ENCODE measurements at regions of chr11 and their contacts with region 1.

Region 1: DNA sequence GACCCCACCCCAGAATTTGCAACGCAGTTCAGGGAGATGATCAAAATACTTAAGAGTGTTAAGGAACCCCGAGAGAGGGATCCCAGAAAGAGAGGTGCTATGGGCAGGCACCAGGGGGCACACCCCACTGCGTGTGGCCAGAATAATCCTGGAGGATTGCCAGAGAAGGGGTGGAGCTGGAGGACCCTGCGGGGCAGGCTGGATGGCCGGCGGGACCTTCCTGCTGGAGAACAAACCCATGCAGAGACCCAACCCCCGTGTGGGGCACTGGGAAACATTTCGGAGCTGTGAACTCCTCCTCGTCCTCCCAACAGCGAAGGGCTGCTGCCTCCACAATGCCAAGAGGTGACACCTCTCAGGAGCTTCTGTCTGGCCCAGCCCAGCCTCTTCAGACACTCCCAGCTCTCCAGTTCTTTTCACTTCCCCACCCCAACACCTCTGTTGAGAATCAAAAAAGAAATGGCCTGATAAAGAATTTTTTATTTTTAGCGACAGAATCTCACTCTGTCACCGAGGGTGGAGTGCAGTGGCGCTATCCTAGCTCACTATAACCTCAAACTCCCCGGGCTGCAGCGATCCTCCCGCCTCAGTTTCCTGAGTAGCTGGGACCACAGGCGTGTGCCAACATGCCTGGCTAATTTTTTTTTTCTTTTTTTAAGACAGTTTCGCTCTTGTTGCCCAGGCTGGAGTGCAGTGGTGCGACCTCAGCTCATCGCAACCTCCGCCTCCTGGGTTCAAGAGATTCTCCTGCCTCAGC is 25.6 kb downstream of the RHOD start:
- DNase-seq: no peak
- ATAC-seq: peak; percentile 5
- H3K4me3 ChIP-seq: no peak overlapping the region
- H3K27ac ChIP-seq: no peak overlapping the region
- H3K4me1 ChIP-seq: no peaks in the 10 kb centered on the region
- H3K27me3 ChIP-seq: no peaks in the 10 kb centered on the region

Region 2: DNA sequence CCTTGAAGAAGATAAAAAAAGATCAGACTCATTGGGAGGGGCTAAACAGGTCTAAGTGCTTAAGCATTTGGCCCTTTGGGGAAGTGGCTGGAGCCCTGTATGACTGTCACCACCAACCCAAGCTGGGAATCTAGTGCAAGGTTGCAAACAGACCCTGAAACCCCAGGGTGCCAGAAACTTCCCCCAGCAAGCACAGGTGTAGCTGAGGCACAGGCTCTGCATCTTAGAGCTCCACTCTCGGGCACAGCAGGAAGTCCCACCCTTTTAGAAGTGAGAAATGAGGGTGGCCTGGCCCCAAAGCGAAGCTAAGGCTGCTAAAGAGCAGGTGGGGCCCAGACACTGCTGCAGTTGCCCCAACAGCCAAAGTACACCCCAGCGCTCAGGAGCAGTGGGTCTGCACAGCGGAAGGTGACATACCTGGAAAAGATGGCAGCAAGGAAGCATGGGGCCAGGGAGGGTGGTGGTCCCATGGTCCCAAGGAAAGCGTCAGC is 31.1 kb after region 1 on chr11:
- intact Hi-C with region 1: no loop called
- DNase-seq: peak in 1 of 2 donors; percentile 37
- ATAC-seq: no peak
- H3K4me3 ChIP-seq: no peak overlapping the region
- H3K27ac ChIP-seq: no peak overlapping the region
- H3K4me1 ChIP-seq: peaks cover 0 to 4% of the 10 kb centered on the region in 2 donors
- H3K27me3 ChIP-seq: no peaks in the 10 kb centered on the region

Region 3: GRCh38 chr11:67160874-67161783 is 78.9 kb after region 1 on chr11:
- intact Hi-C with region 1: loop called (anchors 5 to 10 kb)
- DNase-seq: no peak
- ATAC-seq: no peak
- H3K4me3 ChIP-seq: no peak overlapping the region
- H3K27ac ChIP-seq: no peak overlapping the region
- H3K4me1 ChIP-seq: peaks cover 0 to 2% of the 10 kb centered on the region in 2 donors
- H3K27me3 ChIP-seq: no peaks in the 10 kb centered on the region

Region 4: GRCh38 chr11:67167086-67167485 is 84.9 kb after region 1 on chr11:
- intact Hi-C with region 1: loop called (anchors 5 to 10 kb)
- DNase-seq: no peak
- ATAC-seq: no peak
- H3K4me3 ChIP-seq: no peak overlapping the region
- H3K27ac ChIP-seq: no peak overlapping the region
- H3K4me1 ChIP-seq: peaks cover 0 to 5% of the 10 kb centered on the region in 2 donors
- H3K27me3 ChIP-seq: no peaks in the 10 kb centered on the region

Region 5: DNA sequence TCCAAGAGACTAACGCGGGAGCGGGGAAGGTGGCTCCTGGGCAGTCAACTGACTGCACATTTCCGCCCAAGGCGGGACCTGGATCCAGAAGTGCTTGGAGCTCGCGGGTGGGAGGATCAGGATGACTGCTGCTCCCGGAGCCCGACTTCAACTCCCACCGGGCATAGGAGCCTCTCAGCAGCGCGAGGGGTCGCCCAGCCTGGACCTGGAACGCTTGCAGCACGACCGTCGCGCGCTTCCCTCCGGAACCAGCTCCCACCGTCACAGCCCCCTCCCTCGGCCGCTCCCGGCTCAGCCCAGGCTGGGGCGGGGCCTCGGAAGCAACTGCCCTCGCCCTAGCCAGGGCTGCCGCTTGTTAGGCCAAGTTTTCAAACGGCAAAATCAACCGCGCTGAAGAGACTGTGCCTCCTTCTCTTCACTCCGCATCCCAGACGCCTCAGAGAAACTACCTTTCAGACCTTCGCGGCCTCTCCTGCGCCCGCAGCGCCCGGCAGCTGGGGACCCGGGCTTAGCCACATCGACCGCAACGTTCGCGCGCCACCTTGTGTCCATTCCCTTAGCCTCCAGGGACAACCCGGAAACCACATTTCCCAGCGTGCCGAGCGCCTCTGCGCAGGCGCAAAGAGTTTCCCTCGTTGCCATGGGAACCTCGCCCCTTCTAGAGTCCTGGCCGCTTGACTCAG is 235.1 kb after region 1 on chr11:
- intact Hi-C with region 1: loop called in 1 of 2 experiments (anchors 5 kb)
- DNase-seq: peak; percentile 97 to 99
- ATAC-seq: peak; percentile 97
- H3K4me3 ChIP-seq: peak overlapping the region; percentile 45 to 67
- H3K27ac ChIP-seq: peak overlapping the region in 1 of 2 donors; percentile 64
- H3K4me1 ChIP-seq: no peaks in the 10 kb centered on the region
- H3K27me3 ChIP-seq: no peaks in the 10 kb centered on the region